IMR-90 (cell line): ENCODE measurements at regions of chr2 and their contacts with region 1.

Region 1: GRCh38 chr2:169528271-169528701 is 18.8 kb downstream of the KLHL41 start:
- DNase-seq: peak; percentile 51
- ATAC-seq: peak; percentile 93
- H3K4me3 ChIP-seq: no peak overlapping the region
- H3K27ac ChIP-seq: no peak overlapping the region
- H3K4me1 ChIP-seq: no peaks in the 10 kb centered on the region
- H3K27me3 ChIP-seq: no peaks in the 10 kb centered on the region
- CTCF ChIP-seq: peak; percentile 70
- POLR2A ChIP-seq: no peak
- RAD21 ChIP-seq: peak; percentile 65

Region 2: GRCh38 chr2:169012812-169013627 is 515.3 kb before region 1 on chr2:
- CTCF ChIA-PET with region 1: no interaction called
- POLR2A ChIA-PET with region 1: no interaction called
- dilution Hi-C with region 1: no loop called
- in situ Hi-C with region 1: no loop called
- intact Hi-C with region 1: loop called (anchors 10 kb)
- DNase-seq: no peak
- ATAC-seq: no peak
- H3K4me3 ChIP-seq: no peak overlapping the region
- H3K27ac ChIP-seq: no peak overlapping the region
- H3K4me1 ChIP-seq: no peaks in the 10 kb centered on the region
- H3K27me3 ChIP-seq: no peaks in the 10 kb centered on the region
- CTCF ChIP-seq: no peak
- POLR2A ChIP-seq: no peak
- RAD21 ChIP-seq: no peak

Region 3: DNA sequence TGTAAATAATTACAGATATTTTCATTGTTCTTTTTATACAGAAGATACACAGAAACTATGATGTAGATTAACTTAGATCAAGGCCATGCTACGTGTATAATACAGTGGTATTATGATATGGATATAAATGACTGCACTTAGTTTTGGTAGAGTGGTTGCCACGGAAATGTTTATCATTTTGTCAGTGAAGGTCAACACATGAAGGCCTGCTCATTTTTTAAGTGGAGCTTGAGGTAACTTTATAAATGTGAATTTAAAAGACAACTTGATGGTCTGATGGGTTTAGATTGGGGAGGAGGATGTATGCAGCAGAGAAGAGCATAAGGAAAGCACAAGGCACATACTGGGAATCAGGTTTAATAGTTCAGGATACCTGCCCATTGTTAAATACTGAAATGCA is 63.4 kb before region 1 on chr2:
- CTCF ChIA-PET with region 1: no interaction called
- POLR2A ChIA-PET with region 1: no interaction called
- dilution Hi-C with region 1: no loop called
- in situ Hi-C with region 1: no loop called
- intact Hi-C with region 1: no loop called
- DNase-seq: no peak
- ATAC-seq: no peak
- H3K4me3 ChIP-seq: no peak overlapping the region
- H3K27ac ChIP-seq: no peak overlapping the region
- H3K4me1 ChIP-seq: peaks cover 10% of the 10 kb centered on the region
- H3K27me3 ChIP-seq: no peaks in the 10 kb centered on the region
- CTCF ChIP-seq: no peak
- POLR2A ChIP-seq: no peak
- RAD21 ChIP-seq: no peak

Region 4: DNA sequence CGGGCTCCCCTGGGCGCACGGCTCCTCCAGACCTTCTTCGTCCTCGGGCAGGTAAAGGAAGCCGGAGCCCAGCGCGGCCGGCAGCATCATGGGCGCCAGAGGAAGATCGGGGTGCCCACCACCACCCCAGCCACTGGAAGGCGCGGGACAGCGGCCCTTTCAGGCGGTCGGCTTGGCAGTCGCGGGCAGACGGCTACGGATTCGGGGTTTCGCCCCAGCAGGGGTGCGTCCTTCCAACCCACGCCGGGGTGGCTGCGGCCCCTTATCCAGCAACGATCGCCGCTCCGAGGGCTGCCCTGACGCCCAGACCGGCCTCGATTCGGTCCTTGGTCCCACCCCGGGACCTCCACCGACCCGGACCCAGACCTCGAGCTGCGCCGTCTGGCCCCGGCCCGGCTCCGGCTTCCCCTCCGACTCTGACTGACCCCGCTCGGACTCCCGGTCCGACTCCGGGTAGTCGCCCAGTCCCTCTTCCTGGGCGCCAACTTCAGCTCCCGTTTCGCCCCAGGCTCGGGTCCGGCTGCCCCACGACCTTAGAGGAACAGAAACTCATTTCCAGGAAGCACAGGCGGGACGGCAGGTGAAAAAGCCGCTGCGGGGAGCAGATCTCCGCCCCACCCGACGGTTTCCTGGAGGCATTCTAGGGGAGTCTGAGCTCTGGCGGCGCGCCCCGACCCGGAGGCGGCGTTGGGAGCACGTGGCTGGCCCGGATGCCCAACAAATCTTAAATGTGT is 240.1 kb after region 1 on chr2:
- CTCF ChIA-PET with region 1: interaction called, 3 read pairs
- POLR2A ChIA-PET with region 1: no interaction called
- dilution Hi-C with region 1: no loop called
- in situ Hi-C with region 1: no loop called
- intact Hi-C with region 1: loop called (anchors 2 kb)
- DNase-seq: no peak
- ATAC-seq: no peak
- H3K4me3 ChIP-seq: no peak overlapping the region; the same call in 1 of the 2 replicates
- H3K27ac ChIP-seq: no peak overlapping the region
- H3K4me1 ChIP-seq: no peaks in the 10 kb centered on the region
- H3K27me3 ChIP-seq: peaks cover 10% of the 10 kb centered on the region
- CTCF ChIP-seq: no peak
- POLR2A ChIP-seq: no peak
- RAD21 ChIP-seq: no peak

Region 5: DNA sequence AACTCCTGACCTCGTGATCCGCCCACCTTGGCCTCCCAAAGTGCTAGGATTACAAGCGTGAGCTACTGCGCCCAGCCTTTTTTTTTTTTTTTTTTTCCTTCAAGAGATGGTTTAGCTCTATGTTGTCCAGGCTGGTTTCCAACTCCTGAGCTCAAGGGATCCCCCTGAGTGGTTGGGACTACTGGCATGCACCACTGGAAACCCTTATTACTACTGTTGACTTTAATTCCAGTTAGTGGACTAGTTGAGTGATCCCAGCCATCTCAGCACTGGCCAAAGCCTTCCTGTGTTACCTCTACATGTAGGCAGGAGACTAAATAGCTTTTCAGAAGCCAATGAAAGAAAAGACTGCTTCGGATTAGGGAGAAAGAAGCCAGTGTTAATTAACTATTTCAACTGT is 262.3 kb after region 1 on chr2:
- CTCF ChIA-PET with region 1: no interaction called
- POLR2A ChIA-PET with region 1: no interaction called
- dilution Hi-C with region 1: no loop called
- in situ Hi-C with region 1: no loop called
- intact Hi-C with region 1: loop called (anchors 5 kb)
- DNase-seq: no peak
- ATAC-seq: no peak
- H3K4me3 ChIP-seq: no peak overlapping the region
- H3K27ac ChIP-seq: no peak overlapping the region
- H3K4me1 ChIP-seq: no peaks in the 10 kb centered on the region
- H3K27me3 ChIP-seq: no peaks in the 10 kb centered on the region
- CTCF ChIP-seq: no peak
- POLR2A ChIP-seq: no peak
- RAD21 ChIP-seq: no peak

Region 6: GRCh38 chr2:169877398-169877797 is 349.1 kb after region 1 on chr2:
- CTCF ChIA-PET with region 1: no interaction called
- POLR2A ChIA-PET with region 1: no interaction called
- dilution Hi-C with region 1: no loop called
- in situ Hi-C with region 1: no loop called
- intact Hi-C with region 1: loop called (anchors 1 kb)
- DNase-seq: peak; percentile 33
- ATAC-seq: peak; percentile 42; the same call in 1 of the 2 replicates
- H3K4me3 ChIP-seq: no peak overlapping the region
- H3K27ac ChIP-seq: no peak overlapping the region
- H3K4me1 ChIP-seq: peaks cover 2% of the 10 kb centered on the region; the same call in 1 of the 2 replicates
- H3K27me3 ChIP-seq: no peaks in the 10 kb centered on the region
- CTCF ChIP-seq: peak; percentile 45
- POLR2A ChIP-seq: no peak
- RAD21 ChIP-seq: peak; percentile 42

Region 7: GRCh38 chr2:169933124-169933711 is 404.9 kb after region 1 on chr2:
- CTCF ChIA-PET with region 1: no interaction called
- POLR2A ChIA-PET with region 1: no interaction called
- dilution Hi-C with region 1: no loop called
- in situ Hi-C with region 1: no loop called
- intact Hi-C with region 1: loop called (anchors 2 kb)
- DNase-seq: peak; percentile 54
- ATAC-seq: peak; percentile 89
- H3K4me3 ChIP-seq: no peak overlapping the region
- H3K27ac ChIP-seq: no peak overlapping the region
- H3K4me1 ChIP-seq: no peaks in the 10 kb centered on the region
- H3K27me3 ChIP-seq: no peaks in the 10 kb centered on the region
- CTCF ChIP-seq: peak; percentile 75
- POLR2A ChIP-seq: no peak
- RAD21 ChIP-seq: peak; percentile 74